ENCODE measurements at regions of chr13 and their contacts with region 1.

Region 1: DNA sequence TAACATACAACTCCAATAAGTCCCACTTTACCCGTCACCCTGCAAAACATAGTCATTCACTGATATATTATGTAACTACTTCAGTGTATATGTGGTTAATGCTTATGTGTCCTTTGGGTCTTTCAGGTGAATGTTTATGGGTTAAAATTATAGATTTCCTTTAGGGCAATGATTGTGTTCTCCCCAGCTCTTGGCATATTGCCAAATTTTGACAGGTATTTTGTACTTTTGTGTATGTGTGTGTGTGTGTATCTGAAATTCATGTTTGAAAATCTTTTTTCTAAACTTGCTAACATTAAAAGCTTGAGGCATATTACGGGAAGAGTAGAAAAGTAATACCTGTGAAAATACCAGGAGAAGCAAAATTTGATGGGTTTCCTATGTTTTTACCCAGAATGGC is 8.2 kb downstream of the CDK8 start:
- DNase-seq: no peak
- H3K4me3 ChIP-seq: no peak overlapping the region
- H3K27ac ChIP-seq: no peak overlapping the region
- H3K4me1 ChIP-seq: peaks cover 5% of the 10 kb centered on the region
- H3K27me3 ChIP-seq: no peaks in the 10 kb centered on the region
- CTCF ChIP-seq: no peak

Region 2: DNA sequence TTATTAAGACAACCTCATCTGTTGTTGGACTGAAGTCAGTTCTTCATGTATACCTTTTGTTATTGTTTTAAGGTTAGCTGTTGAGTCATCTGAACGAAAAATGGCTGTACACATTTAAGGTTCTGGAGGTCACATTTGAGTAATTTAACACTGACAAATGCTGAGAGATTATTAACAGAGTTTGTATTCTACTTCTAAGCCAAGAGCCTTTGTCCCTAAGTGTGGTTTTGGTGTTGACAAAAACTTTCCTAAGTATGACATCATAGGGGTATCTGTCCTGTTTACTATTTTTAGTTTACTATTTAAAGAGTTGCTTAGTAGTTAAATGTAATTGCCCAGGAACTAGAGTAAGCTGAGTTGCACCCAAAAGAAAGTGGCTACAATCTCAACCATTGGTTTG is 63.7 kb after region 1 on chr13:
- CTCF ChIA-PET with region 1: no interaction called
- dilution Hi-C with region 1: no loop called
- in situ Hi-C with region 1: no loop called
- intact Hi-C with region 1: loop called (anchors 5 kb)
- DNase-seq: peak; percentile 41
- H3K4me3 ChIP-seq: no peak overlapping the region
- H3K27ac ChIP-seq: no peak overlapping the region
- H3K4me1 ChIP-seq: no peaks in the 10 kb centered on the region
- H3K27me3 ChIP-seq: no peaks in the 10 kb centered on the region
- CTCF ChIP-seq: no peak